ENCODE measurements at regions of chr2 and their contacts with region 1.

Region 1: DNA sequence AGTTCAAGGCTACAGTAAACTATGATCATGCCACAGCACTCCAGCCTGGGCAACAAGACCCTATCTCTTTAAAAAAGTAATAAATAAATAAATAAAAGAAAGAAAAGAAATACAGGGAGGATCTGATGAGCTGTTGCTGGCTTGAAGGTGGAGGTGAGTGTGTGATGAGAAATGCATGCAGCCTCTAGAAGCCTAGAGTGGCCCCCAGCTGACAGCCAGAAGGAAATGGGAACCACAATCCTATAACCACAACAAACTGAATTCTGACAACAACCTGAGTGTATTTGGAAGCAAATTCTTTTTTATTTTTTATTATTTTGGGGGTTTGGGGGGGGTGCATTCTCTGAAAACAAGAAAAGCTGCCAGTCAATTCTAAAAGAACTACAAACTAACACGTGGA is 14.6 kb downstream of the NOL10 start:
- DNase-seq: no peak
- ATAC-seq: peak; percentile 66
- H3K4me3 Mint-ChIP-seq: no peak overlapping the region
- H3K27ac Mint-ChIP-seq: peak overlapping the region; percentile 50
- H3K4me1 Mint-ChIP-seq: peaks cover 23% of the 10 kb centered on the region
- H3K27me3 Mint-ChIP-seq: no peaks in the 10 kb centered on the region

Region 2: GRCh38 chr2:10688921-10689807 is 14.0 kb after region 1 on chr2:
- CTCF ChIA-PET with region 1: interaction called, 10 read pairs
- POLR2A ChIA-PET with region 1: interaction called, 7 read pairs
- DNase-seq: no peak
- ATAC-seq: peak; percentile 40
- H3K4me3 Mint-ChIP-seq: no peak overlapping the region
- H3K27ac Mint-ChIP-seq: no peak overlapping the region
- H3K4me1 Mint-ChIP-seq: peaks cover 10% of the 10 kb centered on the region
- H3K27me3 Mint-ChIP-seq: no peaks in the 10 kb centered on the region

Measured in activated CD8-positive, alpha-beta T cell treated with anti-CD3 and anti-CD28 coated beads, Interleukin-2, amount 10 ng/mL, durations not matched to agents 7 days and 5 days (primary cell).